Activated CD4-positive, alpha-beta memory T cell treated with anti-CD3 and anti-CD28 coated beads for 36 hours (primary cell): ENCODE measurements at regions of chr21 and their contacts with region 1.

Region 1: DNA sequence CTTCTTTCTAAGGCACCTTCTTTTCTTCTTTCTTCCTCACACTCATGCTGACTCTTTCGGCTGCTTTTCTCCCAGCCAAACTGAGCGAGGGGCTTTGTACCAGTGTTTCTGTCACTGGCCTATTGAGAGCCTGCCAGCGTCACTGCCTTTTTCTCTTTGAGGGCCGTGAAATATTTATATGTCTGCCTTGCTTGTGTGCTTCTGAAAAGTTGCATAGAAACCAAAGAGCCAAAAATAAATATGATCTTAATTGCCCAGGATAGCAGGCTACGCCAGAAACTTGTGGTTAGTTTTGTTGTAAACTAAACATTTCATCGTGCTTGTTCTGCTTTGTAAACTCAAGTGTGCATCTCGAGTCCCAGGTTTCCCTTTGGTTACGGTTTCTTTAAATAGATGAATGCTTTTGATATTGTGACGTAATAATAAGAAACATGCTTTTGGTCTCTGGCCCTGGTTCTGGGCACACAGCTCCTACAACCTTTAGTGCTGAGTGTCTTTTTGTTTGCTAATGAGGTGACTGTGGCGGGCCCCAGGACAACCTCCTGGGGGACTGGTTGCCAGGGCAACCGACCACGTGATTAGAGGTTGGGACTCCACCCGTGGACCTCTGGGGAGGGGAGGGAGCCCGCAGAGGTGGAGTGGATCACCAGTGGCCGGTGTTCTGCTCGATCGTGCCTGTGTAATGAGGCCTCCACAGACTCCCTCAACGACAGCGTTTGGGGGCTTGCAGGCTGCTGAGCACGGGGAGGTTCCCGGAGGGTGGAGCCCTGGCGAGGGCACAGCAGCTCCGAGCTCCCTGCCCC is 10.9 kb downstream of the SLC37A1 start:
- DNase-seq: peak; percentile 28
- H3K4me3 Mint-ChIP-seq: no peak overlapping the region
- H3K27ac Mint-ChIP-seq: no peak overlapping the region
- H3K4me1 Mint-ChIP-seq: peaks cover 56% of the 10 kb centered on the region
- H3K27me3 Mint-ChIP-seq: no peaks in the 10 kb centered on the region

Region 2: GRCh38 chr21:41706678-41707077 is 817.9 kb before region 1 on chr21:
- CTCF ChIA-PET with region 1: no interaction called
- POLR2A ChIA-PET with region 1: no interaction called
- intact Hi-C with region 1: no loop called
- DNase-seq: peak; percentile 54
- H3K4me3 Mint-ChIP-seq: no peak overlapping the region
- H3K27ac Mint-ChIP-seq: no peak overlapping the region
- H3K4me1 Mint-ChIP-seq: peaks cover 11% of the 10 kb centered on the region
- H3K27me3 Mint-ChIP-seq: peaks cover 39% of the 10 kb centered on the region

Region 3: GRCh38 chr21:42145569-42146272 is 378.8 kb before region 1 on chr21:
- CTCF ChIA-PET with region 1: no interaction called
- POLR2A ChIA-PET with region 1: no interaction called
- intact Hi-C with region 1: loop called (anchors 10 kb)
- DNase-seq: peak; percentile 75
- H3K4me3 Mint-ChIP-seq: no peak overlapping the region
- H3K27ac Mint-ChIP-seq: no peak overlapping the region
- H3K4me1 Mint-ChIP-seq: peaks cover 3% of the 10 kb centered on the region
- H3K27me3 Mint-ChIP-seq: no peaks in the 10 kb centered on the region

Region 4: GRCh38 chr21:42337830-42338728 is 186.5 kb before region 1 on chr21:
- CTCF ChIA-PET with region 1: no interaction called
- POLR2A ChIA-PET with region 1: no interaction called
- intact Hi-C with region 1: loop called (anchors 5 kb)
- DNase-seq: peak; percentile 87
- H3K4me3 Mint-ChIP-seq: no peak overlapping the region
- H3K27ac Mint-ChIP-seq: no peak overlapping the region
- H3K4me1 Mint-ChIP-seq: peaks cover 23% of the 10 kb centered on the region
- H3K27me3 Mint-ChIP-seq: peaks cover 11% of the 10 kb centered on the region

Region 5: GRCh38 chr21:42456457-42456856 is 68.1 kb before region 1 on chr21:
- CTCF ChIA-PET with region 1: interaction called, 3 read pairs
- POLR2A ChIA-PET with region 1: no interaction called
- intact Hi-C with region 1: loop called (anchors 1 kb)
- DNase-seq: peak; percentile 77
- H3K4me3 Mint-ChIP-seq: no peak overlapping the region
- H3K27ac Mint-ChIP-seq: peak overlapping the region; percentile 81
- H3K4me1 Mint-ChIP-seq: peaks cover 36% of the 10 kb centered on the region
- H3K27me3 Mint-ChIP-seq: no peaks in the 10 kb centered on the region

Region 6: DNA sequence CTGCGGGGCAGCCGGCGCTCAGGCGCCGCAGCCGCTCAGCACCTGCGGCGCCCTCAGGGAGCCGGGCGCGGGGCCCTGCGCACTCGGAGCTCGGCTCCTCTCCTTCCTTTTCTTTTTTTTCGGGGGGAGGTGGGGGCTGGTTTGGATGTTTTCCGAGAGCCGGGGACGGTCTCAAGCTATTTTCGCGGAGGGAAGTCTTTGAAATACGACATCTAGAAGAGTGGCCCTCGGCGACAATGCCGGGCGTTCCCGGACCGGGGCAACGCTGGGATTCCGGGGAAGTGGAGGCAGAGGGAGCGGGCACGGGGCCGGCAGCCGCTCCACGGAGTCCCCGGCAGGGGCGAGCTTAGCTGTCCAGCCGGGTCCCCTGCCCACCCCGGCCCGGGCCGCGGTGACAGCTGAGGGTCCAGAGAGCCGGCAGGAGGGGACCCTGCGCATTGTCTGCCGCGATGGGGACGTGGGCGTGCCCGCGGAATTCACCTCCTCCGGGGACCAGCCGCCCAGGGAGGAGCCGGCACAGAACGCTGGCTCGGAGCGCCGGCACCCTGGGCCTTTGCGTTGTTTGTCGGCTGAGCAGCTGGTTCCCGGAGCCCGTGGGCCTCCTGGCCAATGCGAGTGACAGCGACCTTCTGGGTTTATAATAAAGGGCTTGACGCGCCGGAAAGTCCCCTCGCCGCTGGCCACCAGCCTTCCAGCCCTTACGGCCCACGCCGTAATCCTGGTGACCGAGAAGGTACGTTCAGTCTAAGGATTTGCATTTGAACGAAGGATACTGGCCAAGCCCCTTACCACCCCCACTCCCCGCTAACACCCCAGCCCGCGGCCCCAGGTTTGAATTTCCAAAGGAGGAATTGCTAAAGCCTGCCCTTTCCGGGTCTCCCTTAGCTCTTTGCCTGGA is 10.3 kb before region 1 on chr21:
- CTCF ChIA-PET with region 1: interaction called, 9 read pairs
- POLR2A ChIA-PET with region 1: interaction called, 25 read pairs
- intact Hi-C with region 1: loop called (anchors 1 kb)
- DNase-seq: peak; percentile 77
- H3K4me3 Mint-ChIP-seq: peak overlapping the region; percentile 77
- H3K27ac Mint-ChIP-seq: peak overlapping the region; percentile 54
- H3K4me1 Mint-ChIP-seq: peaks cover 30% of the 10 kb centered on the region
- H3K27me3 Mint-ChIP-seq: no peaks in the 10 kb centered on the region